ENCODE measurements at regions of chr5 and their contacts with region 1.

Region 1: GRCh38 chr5:14946815-14947640 is 75.5 kb upstream of the ANKH start:
- DNase-seq: peak; percentile 66
- H3K4me3 Mint-ChIP-seq: no peak overlapping the region
- H3K27ac Mint-ChIP-seq: no peak overlapping the region
- H3K4me1 Mint-ChIP-seq: peaks cover 6% of the 10 kb centered on the region
- H3K27me3 Mint-ChIP-seq: no peaks in the 10 kb centered on the region
- CTCF ChIP-seq: peak; percentile 27

Region 2: GRCh38 chr5:14958196-14958595 is 11.2 kb after region 1 on chr5:
- CTCF ChIA-PET with region 1: interaction called, 18 read pairs
- POLR2A ChIA-PET with region 1: interaction called, 3 read pairs
- intact Hi-C with region 1: no loop called
- DNase-seq: peak; percentile 76
- H3K4me3 Mint-ChIP-seq: no peak overlapping the region
- H3K27ac Mint-ChIP-seq: no peak overlapping the region
- H3K4me1 Mint-ChIP-seq: peaks cover 19% of the 10 kb centered on the region
- H3K27me3 Mint-ChIP-seq: no peaks in the 10 kb centered on the region
- CTCF ChIP-seq: no peak

Measured in MCF 10A (cell line).